Head of caudate nucleus (tissue), 42 donors: ENCODE measurements at regions of chr9 and their contacts with region 1.

Region 1: DNA sequence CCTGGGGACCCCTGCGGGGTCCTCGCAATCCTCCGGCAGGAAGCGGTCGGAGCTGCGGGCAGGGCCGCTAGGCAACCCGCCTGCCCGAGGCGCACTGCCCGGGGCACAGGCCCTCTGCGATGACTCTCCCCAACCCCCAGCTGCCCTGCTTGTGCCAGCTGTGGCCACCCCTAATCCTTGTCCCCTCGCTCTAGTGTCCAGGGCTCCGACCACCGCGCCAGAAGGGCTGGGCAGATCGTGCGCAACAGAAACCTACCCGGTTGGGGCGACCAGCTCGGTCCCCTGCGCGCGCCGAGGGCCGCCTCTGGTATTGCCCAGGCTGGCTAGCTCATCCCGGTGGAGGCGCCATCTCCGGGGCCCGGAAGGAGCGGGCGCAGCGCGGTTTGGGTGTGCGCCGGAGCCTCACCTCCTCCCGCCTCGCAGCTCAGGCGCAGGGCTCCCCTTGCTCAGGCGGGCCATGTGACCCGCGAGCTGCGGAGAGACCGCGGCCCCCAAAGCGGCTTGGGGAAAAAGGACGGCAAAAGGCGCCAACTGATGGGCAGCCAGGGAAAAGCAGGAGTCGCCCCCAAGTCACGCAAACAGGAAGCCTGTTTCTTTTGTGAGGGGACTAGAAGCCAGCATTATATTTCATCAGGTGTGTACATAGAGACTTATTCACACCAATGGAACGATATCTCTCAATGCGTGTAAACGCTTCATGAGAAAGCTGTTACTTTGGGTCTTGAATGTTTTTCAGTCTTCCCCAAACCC is 46.8 kb upstream of the RNF20 start:
- DNase-seq: peak; percentile 58 to 94 (median 85)

Region 2: GRCh38 chr9:101468116-101468515 is 18.8 kb before region 1 on chr9:
- intact Hi-C with region 1: loop called (anchors 2 kb)
- DNase-seq: peak in 32 of 42 donors; percentile 8 to 84 (median 56)

Region 3: GRCh38 chr9:101711330-101711941 is 224.6 kb after region 1 on chr9:
- intact Hi-C with region 1: no loop called
- DNase-seq: peak in 2 of 42 donors; percentile 2 to 44